ENCODE measurements at regions of chr19 and their contacts with region 1.

Region 1: DNA sequence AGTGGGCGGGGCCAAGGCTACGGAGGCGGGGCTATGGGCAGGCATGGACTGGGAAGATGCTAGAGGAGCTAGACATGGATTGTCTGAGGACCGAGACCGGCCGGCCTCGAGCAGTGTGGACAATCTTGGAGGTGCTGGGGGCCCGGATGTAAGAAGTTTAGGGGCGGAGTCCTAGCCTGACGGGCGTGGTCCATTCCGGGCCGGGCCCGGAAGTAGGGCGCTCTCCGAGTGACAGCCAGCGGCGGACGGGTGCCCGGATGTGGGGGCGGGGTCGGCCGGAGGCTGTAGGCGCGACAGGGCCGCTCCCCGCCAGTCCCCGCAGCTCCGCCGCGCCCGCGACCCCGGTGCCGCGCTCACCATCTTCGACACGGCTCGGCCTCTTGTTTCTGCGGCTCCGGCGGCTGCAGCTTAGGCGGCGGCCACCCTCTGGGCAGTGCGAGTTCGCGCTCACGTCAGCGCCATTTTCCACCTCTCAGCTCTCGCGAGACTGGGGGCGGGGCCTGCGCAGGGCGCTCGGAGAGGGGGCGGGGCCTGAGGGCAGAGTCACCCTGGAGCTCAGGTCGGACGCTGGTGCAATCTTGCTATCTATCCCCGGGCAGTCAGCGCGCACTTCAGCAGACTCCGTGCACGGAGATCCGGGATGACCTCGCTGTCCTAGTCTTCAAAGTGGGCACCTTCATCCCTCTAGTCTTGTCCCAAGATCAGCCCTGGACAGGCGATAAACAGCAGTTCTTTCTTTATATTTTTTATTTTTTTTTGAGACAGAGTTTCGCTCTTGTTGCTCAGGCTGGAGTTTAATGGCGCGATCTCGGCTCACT is at the start of gene ZNF414:
- DNase-seq: peak; percentile 97
- H3K4me3 Mint-ChIP-seq: peak within 1 kb of the TSS; percentile 86
- H3K27ac Mint-ChIP-seq: peak within 1 kb of the TSS; percentile 98
- H3K4me1 Mint-ChIP-seq: peaks cover 59% of the 10 kb centered on the region
- H3K27me3 Mint-ChIP-seq: no peaks in the 10 kb centered on the region
- total RNA-seq, gene ZNF414: 29.7 to 33.3 TPM

Region 2: DNA sequence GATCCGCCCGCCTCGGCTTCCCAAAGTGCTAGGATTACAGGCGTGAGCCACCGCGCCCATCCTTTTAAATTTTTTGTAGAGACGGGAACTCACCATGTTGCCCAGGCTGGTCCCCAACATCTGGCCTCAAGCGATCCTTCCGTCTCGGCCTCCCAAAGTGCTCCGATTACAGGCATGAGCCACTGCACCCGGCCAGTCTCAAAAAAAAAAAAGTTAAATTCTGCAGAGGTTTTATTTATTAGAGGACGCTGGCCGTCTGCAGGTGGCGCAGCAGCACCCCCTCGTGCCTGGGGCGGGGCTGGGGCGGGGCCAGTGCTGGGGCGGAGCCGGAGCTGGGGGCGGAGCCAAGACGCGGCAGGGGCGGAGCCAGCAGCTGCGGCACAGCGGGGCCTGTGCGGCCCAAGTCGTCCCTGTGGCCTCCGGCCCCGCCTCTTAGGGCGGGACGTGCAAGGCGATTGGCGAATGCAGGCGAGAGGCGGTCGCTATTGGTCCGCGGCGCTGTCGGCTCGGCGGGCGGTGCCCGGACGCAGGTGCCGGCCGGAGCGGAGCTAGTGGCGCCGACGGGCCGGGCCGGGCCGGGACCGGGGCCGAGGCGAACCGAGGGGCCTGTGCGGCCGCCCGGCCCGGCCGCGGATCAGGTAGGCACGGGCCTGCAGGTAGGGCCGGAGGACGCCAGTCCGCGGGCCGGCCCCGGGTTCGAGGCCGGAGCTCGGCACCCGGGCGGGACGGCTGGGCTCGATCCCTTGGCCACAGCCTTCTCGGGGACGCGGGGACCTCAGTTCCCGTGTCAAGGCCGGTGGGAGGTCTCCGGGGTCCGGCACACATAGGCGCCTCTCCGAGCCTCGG is 100.9 kb before region 1 on chr19 and contains the start of gene MARCHF2:
- CTCF ChIA-PET with region 1: interaction called, 6 read pairs
- POLR2A ChIA-PET with region 1: interaction called, 18 read pairs
- DNase-seq: peak; percentile 98
- H3K4me3 Mint-ChIP-seq: peak within 1 kb of the TSS; percentile 58
- H3K27ac Mint-ChIP-seq: no peak within 1 kb of the TSS
- H3K4me1 Mint-ChIP-seq: peaks cover 10% of the 10 kb centered on the region
- H3K27me3 Mint-ChIP-seq: no peaks in the 10 kb centered on the region
- total RNA-seq, gene MARCHF2: 20.6 to 20.8 TPM

Region 3: DNA sequence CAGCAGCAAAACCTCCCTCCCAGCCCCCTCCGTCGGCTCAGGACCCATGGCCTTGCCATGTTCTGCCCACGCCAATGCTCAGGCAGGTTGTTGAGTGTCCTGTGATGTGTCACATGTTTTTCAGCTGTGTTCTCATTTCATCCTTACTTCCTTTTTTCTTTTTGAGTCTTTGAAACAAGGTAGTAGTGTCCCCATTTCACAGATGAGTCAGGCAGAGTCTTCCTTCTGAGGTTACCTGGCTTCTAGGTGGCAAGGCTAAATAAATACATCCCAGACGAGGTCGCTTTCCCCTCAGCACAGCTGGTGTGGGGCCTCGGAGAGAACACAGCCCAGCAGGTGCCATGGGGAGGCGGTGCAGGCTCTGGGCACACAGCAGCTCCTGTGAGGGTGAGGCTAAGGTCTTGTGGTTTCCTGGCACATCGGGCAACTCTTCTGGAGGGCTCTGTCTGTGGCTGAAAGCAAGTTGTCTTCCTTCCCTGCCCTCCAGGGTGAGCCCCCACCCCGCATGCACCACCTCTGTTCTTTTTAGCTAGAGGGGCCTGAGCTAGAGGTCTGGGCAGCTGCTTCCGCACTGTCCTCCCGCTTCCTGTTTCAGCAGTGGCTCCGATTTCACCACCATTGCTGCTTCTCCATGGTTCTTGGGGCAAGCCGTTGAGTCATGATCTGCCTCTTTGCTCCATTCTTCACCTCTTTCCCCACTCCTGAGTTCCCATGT is 26.6 kb before region 1 on chr19:
- CTCF ChIA-PET with region 1: interaction called, 10 read pairs
- POLR2A ChIA-PET with region 1: interaction called, 32 read pairs
- DNase-seq: peak; percentile 69
- H3K4me3 Mint-ChIP-seq: no peak overlapping the region
- H3K27ac Mint-ChIP-seq: peak overlapping the region; percentile 86
- H3K4me1 Mint-ChIP-seq: peaks cover 31% of the 10 kb centered on the region
- H3K27me3 Mint-ChIP-seq: no peaks in the 10 kb centered on the region

Region 4: DNA sequence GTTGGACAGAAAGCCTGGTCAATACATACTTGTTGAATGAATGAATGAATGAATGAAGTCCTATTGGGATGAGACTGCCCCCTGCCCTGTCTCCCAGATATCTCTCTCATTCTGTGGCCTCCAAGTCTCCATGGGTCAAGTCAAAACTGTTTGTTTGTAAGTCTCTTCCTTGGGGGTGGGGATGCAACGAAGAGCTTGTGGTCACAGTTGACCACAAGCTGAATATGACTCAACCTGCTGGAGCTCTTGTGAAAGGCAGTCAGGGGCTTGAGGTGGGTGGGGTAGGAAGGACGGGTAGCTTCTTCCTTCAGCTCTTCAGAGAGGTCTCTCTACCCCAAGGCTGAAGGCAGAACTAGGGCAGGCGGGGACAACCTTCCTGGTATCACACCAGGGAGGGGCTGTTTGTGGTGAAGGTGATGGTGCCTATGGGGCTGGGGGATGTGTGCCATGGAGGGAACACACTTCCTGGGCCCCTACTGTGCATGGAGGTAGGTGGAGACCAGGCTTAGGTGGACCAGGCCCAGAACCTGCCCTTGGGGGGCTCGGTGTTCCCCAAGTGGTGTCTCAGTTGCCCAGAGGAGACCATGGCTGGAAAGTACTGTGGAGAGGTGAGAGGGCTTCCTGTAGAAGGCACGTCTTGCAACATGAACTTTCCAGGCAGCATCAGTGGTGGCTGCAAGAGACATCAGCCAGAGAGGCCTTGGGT is 55.3 kb after region 1 on chr19:
- CTCF ChIA-PET with region 1: interaction called, 4 read pairs
- POLR2A ChIA-PET with region 1: interaction called, 104 read pairs
- DNase-seq: peak; percentile 88
- H3K4me3 Mint-ChIP-seq: peak overlapping the region; percentile 69
- H3K27ac Mint-ChIP-seq: peak overlapping the region; percentile 96
- H3K4me1 Mint-ChIP-seq: peaks cover 85% of the 10 kb centered on the region
- H3K27me3 Mint-ChIP-seq: no peaks in the 10 kb centered on the region

Region 5: GRCh38 chr19:8654591-8655339 is 140.9 kb after region 1 on chr19:
- CTCF ChIA-PET with region 1: no interaction called
- POLR2A ChIA-PET with region 1: no interaction called
- DNase-seq: peak; percentile 75
- H3K4me3 Mint-ChIP-seq: peak overlapping the region; percentile 38
- H3K27ac Mint-ChIP-seq: no peak overlapping the region
- H3K4me1 Mint-ChIP-seq: peaks cover 28% of the 10 kb centered on the region
- H3K27me3 Mint-ChIP-seq: peaks cover 5% of the 10 kb centered on the region

Measured in activated CD4-positive, alpha-beta memory T cell treated with anti-CD3 and anti-CD28 coated beads, Interleukin-2, amount 10 ng/mL, durations not matched to agents 7 days and 5 days (primary cell).